Posterior vena cava (tissue), 2 donors: ENCODE measurements at regions of chr10 and their contacts with region 1.

Region 1: DNA sequence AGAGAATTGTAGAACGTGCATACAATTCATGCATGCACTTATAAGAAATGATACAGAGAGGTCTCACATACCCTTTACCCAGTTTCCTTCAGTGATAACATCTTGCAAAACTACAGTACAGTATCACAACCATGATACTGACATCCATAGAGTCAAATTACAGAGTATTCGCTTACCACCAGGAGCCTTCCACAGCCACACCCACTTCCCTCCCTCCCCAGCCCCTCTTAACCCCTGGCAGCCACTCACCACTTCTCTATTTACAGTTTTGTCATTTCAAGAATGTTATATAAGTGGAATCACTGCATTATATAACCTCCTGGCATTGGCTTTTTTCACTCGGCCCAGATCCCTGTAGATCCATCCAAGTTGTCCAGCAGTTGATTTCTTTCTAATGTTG is 143.8 kb downstream of the ZNF248 start:
- DNase-seq: no peak

Region 2: DNA sequence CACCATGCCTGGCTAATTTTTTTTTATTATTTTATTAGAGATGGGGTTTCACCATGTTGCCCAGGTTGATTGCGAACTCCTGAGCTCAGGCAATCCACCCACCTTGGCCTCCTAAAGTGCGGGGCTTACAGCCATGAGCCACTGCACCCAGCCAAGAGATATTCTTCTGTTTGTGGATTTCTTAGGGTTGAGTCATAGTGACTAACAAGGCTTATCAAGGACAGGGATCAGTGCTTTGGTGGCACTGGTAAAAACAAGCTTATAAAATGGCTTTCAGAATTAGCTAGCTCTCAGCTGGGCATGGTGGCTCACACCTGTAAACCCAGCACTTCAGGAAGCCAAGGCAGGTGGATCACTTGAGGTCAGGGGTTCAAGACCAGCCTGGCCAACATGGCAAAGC is 21.3 kb after region 1 on chr10:
- intact Hi-C with region 1: loop called in 1 of 2 experiments (anchors 1 kb)
- DNase-seq: no peak

Region 3: GRCh38 chr10:37754538-37755323 is 41.1 kb after region 1 on chr10:
- intact Hi-C with region 1: no loop called
- DNase-seq: no peak

Region 4: GRCh38 chr10:38038107-38038931 is 324.7 kb after region 1 on chr10:
- intact Hi-C with region 1: no loop called
- DNase-seq: no peak